Posterior cingulate gyrus (tissue), 11 donors: ENCODE measurements at regions of chr9 and their contacts with region 1.

Region 1: GRCh38 chr9:106862825-106863720 is at the start of gene ZNF462:
- DNase-seq: peak; percentile 33 to 89 (median 48)

Region 2: DNA sequence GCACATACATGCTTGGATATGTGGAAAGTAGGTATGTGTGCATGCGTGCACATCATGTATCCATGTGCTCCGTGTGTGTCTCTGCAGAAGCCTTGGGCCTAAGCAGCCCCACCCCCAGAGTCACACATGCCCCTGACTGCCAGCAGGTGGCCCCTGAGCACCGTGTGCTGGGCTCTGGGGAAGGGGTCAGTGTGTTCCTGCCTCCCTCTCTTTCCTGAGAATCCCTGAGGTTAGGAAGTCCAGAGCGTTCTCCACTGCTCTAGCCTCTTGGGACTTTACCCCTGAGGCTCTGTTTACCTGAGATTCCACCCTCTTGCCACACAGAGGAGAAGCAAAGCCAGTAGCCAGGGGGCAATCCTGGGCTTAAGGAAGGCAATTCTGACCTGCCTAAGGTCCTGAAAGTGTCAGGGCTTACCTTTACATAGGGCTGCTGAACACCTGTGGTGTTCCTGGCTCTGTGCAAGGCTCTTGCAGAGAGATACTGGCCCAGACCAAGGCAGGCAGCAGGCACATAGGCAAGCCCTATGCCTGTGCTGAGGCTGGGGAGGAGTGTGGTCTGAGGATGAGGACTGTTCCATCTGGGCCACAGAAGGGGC is 961.5 kb before region 1 on chr9:
- intact Hi-C with region 1: loop called (anchors 10 kb)
- DNase-seq: peak in 8 of 10 donors; percentile 32 to 91 (median 56)

Region 3: DNA sequence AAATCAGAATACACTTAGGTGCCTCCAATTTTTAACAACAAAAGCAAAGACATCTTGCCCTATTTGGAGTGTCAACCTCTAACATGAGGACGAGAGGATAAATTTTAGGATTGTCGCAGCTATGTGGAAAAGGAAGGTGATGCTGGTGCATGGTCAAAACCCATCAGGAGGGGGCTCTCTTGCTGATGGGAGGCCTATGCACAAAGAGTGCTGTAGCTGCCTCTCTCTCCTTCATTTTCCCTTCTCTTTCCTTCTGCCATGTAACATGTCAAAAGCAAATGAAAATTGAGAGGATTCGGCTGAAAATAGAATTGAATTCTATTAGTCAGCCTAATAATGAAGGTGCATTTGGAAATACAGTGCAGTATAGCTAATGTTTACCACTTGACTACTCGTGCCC is 578.8 kb before region 1 on chr9:
- intact Hi-C with region 1: loop called (anchors 5 kb)
- DNase-seq: peak in 3 of 10 donors; percentile 19 to 75 (median 34)

Region 4: DNA sequence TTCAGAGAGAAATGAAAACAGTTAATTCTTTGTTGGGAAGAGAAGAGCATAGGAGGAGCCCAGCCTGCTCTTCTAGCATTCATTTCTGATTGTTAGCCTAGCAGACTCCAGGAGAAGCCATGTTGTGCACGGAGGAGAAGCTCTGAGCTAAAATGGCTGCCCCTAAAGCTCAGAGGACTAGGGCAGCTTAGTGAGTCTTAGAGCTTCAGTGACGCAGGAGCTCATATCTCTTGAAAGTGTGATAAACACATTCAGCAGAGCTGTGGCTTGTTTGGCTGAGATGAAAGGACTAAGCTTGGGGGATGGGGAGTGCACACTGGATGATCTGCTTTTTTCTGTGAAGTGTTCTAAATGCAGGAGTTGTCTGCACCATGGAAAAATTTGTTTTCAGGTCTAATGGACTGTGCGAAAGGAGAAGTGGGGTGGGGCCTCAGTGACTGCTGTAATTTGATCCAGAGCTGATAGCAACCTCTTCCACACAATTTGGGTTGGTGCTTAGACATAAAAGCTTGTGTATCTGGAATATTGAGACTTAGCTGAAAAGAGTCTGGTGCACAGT is 58.3 kb after region 1 on chr9:
- intact Hi-C with region 1: loop called (anchors 5 kb)
- DNase-seq: peak in 2 of 10 donors; percentile 28 to 33

Region 5: DNA sequence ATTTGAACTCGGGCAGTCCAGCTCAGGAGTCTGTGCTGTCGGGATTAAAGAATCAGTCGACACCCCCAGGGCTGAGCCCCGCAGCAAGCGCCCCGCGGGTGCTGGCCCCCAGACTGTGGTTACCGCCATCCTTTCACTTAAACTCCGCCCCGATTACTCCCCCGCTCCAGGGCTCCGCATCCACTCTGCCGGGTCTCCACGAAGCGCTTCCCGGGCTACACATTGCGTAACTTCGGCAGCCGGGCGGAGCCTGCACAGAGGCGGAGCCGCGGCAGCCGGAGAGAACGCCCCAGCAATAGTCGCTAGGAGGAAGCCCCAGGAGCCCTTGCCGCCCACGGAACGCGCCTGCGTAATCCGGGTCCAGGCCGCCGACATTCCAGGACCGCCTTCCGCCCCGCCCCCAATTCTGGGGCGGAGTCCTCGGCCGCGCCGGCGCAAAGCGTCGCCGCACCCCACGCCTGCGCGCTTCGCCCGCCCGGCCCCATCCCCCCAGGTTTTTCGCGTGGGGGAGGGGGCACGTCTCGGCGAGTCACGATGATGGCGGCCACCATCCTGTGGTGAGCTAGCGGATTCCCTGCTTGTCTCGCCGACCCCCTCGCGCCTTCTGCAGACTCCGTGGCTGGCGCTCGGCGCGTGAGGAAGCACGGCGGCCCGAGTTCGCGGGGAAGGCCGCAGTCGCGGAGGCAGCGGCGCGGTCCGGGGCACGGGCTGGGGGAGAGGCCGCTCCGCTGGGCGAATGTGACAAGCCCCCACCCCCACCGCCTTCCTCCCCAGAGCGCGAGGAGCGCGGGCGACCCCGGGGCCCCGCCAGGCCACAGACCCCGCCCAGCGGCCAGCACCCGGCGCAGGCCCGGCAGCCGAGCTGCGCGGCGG is 419.9 kb after region 1 on chr9 and contains the start of gene RAD23B:
- intact Hi-C with region 1: loop called (anchors 10 kb)
- DNase-seq: peak; percentile 96 to 100 (median 98)